Panc1 (cell line): ENCODE measurements at regions of chr20 and their contacts with region 1.

Region 1: DNA sequence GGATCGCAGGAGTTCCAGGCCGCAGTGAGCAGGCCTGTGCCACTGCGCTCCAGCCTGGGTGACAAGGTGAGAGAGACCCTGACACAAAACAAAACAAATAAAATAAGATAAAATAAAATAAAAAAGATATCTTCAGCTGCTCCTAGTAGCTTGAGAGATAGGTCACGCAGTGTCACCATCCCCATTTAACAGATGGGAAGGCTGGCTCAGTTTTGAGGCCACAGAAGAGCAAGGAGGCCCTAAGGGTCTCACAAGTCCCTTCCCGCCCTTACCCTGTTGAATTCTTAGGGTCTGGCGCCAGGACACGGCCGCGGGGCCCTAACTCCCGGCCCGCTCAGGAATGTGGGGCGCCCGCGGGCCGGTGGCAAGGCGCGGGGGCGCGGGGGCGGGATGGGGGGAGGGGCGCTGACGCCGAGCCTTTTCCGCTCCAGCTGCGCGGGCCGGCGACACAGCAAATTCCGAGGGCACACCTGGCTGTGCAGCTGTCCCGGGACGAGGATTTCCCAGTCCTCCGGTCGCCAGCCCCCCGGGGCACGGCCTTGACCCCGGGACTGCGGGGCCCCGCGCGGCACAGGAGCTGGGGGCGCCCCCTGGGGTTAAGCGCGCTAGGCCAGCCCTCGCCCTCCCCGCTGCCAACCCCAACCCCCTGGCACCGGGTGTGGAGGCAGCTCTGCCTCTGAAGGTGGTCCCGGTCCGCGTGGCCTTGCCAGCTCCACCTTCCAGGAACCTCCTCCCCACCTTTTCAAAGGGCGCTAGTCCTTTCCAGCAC is 10.3 kb upstream of the R3HDML start:
- DNase-seq: no peak
- ATAC-seq: 0 out of 2 replicates have a peak, but pooled peaks have one; percentile 15
- H3K4me3 ChIP-seq: peak overlapping the region; percentile 12 to 20; a peak in 2 of 4 replicates
- H3K27ac ChIP-seq: no peak overlapping the region
- H3K4me1 ChIP-seq: no peaks in the 10 kb centered on the region
- H3K27me3 ChIP-seq: no peaks in the 10 kb centered on the region
- CTCF ChIP-seq: no peak

Region 2: DNA sequence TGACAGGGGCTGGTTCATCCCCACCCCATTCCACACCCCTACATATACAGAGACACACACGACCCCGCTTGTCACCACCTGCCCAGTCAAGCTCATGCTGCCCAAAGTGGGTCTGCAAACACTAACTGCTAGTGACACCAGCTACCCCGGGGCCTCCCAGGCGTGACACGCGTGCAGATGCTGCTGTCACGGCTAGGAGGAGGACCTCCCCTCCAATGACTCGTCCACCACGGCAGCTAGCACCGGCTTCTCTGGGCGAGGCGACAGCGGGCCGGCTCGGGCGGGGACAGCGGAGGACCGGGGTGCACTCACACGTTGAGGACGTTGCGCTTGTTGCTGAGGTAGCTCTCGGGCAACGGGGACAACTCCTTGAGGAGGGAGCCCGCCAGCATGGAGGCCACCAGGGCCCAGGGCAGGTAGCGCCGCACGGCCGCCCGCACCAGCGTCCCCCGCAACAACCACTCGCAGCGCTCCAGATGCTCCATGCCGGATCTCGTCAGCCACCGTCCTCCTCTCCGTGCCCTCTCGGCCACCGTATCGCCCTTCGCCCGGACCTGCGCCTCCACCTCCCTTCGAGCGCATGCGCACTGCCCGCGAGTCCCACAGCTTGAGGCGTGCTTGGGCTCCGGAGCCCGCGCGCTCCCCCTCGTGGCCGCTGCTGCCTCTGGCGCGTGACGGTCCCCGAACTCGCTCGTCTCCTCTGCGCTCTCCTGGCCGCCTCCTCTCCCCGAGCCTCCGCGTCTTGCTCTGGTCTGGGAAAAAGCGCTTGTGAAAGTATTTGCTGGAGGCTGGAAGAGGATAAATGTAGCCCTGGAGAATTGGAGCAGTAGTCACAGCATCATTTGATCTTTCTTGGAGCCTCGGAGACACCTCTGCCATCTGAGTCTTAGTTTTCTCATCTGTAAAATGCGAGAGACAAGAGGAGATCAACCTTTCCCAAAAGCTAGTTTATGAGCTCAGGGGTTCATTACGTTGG is 15.6 kb before region 1 on chr20 and contains the start of gene FITM2:
- CTCF ChIA-PET with region 1: interaction called, 13 read pairs
- POLR2A ChIA-PET with region 1: no interaction called
- in situ Hi-C with region 1: no loop called
- intact Hi-C with region 1: no loop called
- DNase-seq: peak; percentile 78
- ATAC-seq: peak; percentile 99
- H3K4me3 ChIP-seq: peak within 1 kb of the TSS; percentile 85 to 96
- H3K27ac ChIP-seq: peak within 1 kb of the TSS; percentile 77
- H3K4me1 ChIP-seq: peaks cover 6% of the 10 kb centered on the region; the same call in 1 of the 2 replicates
- H3K27me3 ChIP-seq: no peaks in the 10 kb centered on the region
- CTCF ChIP-seq: peak; percentile 99
- total RNA-seq, gene FITM2: 10.5 TPM